Caco-2 (cell line): ENCODE measurements at regions of chr1 and their contacts with region 1.

Region 1: GRCh38 chr1:50901872-50902271 is 58.2 kb downstream of the FAF1 start:
- DNase-seq: no peak
- H3K4me3 ChIP-seq: no peak overlapping the region
- H3K4me3 Mint-ChIP-seq: no peak overlapping the region
- H3K27ac Mint-ChIP-seq: no peak overlapping the region
- H3K4me1 ChIP-seq: no peaks in the 10 kb centered on the region
- H3K4me1 Mint-ChIP-seq: no peaks in the 10 kb centered on the region
- H3K27me3 ChIP-seq: no peaks in the 10 kb centered on the region
- H3K27me3 Mint-ChIP-seq: no peaks in the 10 kb centered on the region
- CTCF ChIP-seq: no peak

Region 2: GRCh38 chr1:50829014-50829958 is 72.6 kb before region 1 on chr1:
- CTCF ChIA-PET with region 1: no interaction called
- POLR2A ChIA-PET with region 1: no interaction called
- intact Hi-C with region 1: no loop called
- DNase-seq: no peak
- H3K4me3 ChIP-seq: no peak overlapping the region
- H3K4me3 Mint-ChIP-seq: no peak overlapping the region
- H3K27ac Mint-ChIP-seq: no peak overlapping the region
- H3K4me1 ChIP-seq: no peaks in the 10 kb centered on the region
- H3K4me1 Mint-ChIP-seq: no peaks in the 10 kb centered on the region
- H3K27me3 ChIP-seq: no peaks in the 10 kb centered on the region
- H3K27me3 Mint-ChIP-seq: no peaks in the 10 kb centered on the region
- CTCF ChIP-seq: no peak

Region 3: GRCh38 chr1:50858761-50859160 is 43.1 kb before region 1 on chr1:
- CTCF ChIA-PET with region 1: no interaction called
- POLR2A ChIA-PET with region 1: no interaction called
- intact Hi-C with region 1: loop called (anchors 2 kb)
- DNase-seq: no peak
- H3K4me3 ChIP-seq: no peak overlapping the region
- H3K4me3 Mint-ChIP-seq: no peak overlapping the region
- H3K27ac Mint-ChIP-seq: no peak overlapping the region
- H3K4me1 ChIP-seq: no peaks in the 10 kb centered on the region
- H3K4me1 Mint-ChIP-seq: no peaks in the 10 kb centered on the region
- H3K27me3 ChIP-seq: no peaks in the 10 kb centered on the region
- H3K27me3 Mint-ChIP-seq: no peaks in the 10 kb centered on the region
- CTCF ChIP-seq: no peak

Region 4: DNA sequence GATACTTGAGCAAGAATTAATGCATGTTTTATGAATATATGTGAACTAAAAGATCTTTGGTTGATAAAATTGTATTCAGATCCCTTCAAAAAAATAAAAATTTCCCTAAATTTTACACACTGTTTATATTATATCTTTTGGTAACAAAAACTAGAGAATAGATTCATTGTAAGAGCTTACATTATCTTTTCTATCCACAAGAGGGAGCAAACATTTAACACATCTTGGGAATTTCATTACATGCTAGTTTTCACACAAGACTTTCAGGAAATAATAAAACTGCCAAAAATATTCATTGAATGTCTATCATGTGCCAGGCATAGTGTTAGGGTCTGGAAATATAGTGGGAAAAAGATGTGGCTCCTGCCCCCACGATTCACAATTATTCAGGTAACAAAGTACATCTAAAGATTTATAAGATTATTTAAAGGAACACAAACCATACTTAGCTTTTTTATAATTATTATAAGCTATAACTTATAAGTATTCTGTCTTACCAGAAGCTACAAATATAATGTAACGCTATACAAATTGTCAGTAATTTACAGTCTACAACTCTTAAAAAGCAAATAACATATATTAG is 27.6 kb after region 1 on chr1:
- CTCF ChIA-PET with region 1: no interaction called
- POLR2A ChIA-PET with region 1: no interaction called
- intact Hi-C with region 1: no loop called
- DNase-seq: no peak
- H3K4me3 ChIP-seq: no peak overlapping the region
- H3K4me3 Mint-ChIP-seq: no peak overlapping the region
- H3K27ac Mint-ChIP-seq: no peak overlapping the region
- H3K4me1 ChIP-seq: no peaks in the 10 kb centered on the region
- H3K4me1 Mint-ChIP-seq: no peaks in the 10 kb centered on the region
- H3K27me3 ChIP-seq: no peaks in the 10 kb centered on the region
- H3K27me3 Mint-ChIP-seq: no peaks in the 10 kb centered on the region
- CTCF ChIP-seq: peak; percentile 32 to 38